PC-9 (cell line): ENCODE measurements at regions of chr7 and their contacts with region 1.

Region 1: DNA sequence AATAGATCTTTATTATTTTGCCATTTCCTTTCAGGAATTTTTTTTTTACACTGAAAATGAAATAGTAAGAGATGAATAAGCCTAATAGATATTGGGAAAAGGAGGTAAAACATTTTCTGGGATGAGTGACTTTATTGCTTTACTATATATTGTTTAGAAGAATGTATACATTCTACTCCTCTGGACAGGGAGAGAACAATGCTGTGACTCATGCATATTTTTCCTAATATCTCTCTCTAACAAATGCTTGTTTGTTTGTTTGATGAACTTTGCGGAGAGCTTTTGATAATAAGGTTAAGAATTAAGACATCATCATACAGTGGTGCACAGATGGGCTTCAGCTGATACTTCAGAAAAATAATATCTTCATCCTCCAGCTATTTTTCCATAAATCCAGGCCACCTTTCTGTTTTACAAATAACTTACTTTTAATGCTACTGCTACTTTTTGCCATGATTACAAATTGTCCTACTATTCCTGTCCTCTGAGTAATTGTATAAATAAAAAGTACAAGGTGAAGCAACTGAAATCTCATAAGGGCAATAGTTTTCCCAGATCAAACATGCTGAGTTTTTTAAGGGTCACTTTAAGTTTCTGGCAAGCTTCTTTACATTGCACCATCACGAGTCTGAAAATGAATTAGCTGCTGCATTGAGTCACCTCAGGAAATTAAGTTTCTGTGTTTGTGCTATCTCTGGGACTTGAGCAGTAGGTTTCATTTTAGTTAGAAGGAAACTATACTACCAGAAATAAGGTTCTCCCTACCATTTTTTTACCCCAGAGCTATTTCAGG is 207.3 kb upstream of the POT1 start:
- DNase-seq: peak; percentile 8 to 84
- H3K4me3 ChIP-seq: peak overlapping the region; percentile 36
- H3K27ac ChIP-seq: peak overlapping the region; percentile 88
- H3K4me1 ChIP-seq: peaks cover 22% of the 10 kb centered on the region
- H3K27me3 ChIP-seq: no peaks in the 10 kb centered on the region
- CTCF ChIP-seq: no peak

Region 2: GRCh38 chr7:124929467-124930172 is 207.3 kb before region 1 on chr7 and contains the start of gene POT1:
- CTCF ChIA-PET with region 1: no interaction called
- POLR2A ChIA-PET with region 1: no interaction called
- intact Hi-C with region 1: loop called (anchors 5 kb)
- DNase-seq: peak; percentile 96 to 98
- H3K4me3 ChIP-seq: peak within 1 kb of the TSS; percentile 73
- H3K27ac ChIP-seq: peak within 1 kb of the TSS; percentile 60
- H3K4me1 ChIP-seq: peaks cover 9% of the 10 kb centered on the region
- H3K27me3 ChIP-seq: no peaks in the 10 kb centered on the region
- CTCF ChIP-seq: no peak
- total RNA-seq, gene POT1: 42.7 and 46.9 TPM in 2 replicates

Region 3: DNA sequence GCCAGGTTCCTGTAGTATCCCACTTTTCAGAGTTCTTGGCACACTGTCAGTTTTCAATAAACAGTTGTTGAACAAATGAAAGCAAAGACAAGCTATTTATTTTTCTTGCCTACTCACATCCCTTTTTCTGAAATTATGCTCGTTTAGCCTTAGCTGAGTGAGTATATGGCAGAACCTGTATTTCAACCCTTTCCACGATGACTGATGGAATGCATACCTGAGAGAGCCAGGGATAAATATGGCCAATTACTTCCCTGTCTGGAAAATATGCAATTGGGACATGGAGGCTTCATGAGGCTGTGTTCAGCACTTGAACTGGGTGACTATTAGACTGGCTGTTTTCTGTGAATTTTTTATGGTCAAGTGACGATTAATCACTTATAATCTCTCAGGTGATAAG is 62.8 kb before region 1 on chr7:
- CTCF ChIA-PET with region 1: no interaction called
- POLR2A ChIA-PET with region 1: no interaction called
- intact Hi-C with region 1: loop called (anchors 2 kb)
- DNase-seq: peak; percentile 30 to 79
- H3K4me3 ChIP-seq: no peak overlapping the region
- H3K27ac ChIP-seq: 0 out of 2 replicates have a peak overlapping the region, but pooled peaks have one; percentile 36
- H3K4me1 ChIP-seq: peaks cover 14% of the 10 kb centered on the region; the same call in 1 of the 2 replicates
- H3K27me3 ChIP-seq: no peaks in the 10 kb centered on the region
- CTCF ChIP-seq: no peak